PC-3 (cell line): ENCODE measurements at regions of chr20 and their contacts with region 1.

Region 1: DNA sequence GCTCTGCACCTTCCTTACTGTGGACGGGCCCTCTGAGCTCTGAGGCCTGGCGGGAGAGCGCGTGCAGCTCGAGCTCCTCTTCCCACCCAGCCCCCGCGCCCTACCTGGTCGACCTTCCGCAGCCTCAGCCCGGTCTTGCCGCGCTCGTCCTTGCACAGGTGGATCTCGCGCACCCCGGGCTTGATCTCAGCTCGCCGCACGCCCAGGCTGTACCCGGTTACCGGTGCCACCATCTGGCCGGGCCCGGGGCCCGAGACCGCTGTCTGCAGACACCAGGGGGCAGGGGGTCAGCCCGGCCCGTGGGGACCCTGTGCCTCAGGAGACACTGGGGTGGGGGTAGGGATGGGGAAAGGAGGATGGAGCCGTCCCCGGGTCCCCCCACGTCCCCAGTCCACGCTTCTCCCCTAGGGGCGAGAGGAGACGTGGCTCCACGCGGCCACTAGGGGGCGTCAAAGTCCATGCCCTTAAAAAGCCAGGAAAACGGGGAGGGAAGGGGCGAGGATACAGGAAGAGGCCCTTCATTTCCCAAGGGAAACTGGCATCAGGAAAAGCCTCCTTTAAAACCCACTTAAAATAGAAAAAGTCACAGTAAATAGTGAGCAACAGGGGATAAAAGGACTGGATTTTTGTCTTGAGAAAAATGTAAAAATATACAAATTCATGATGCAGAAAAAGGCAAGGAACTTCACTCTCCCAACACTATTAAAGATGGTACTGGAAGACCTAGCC is 15.5 kb downstream of the SDCBP2 start:
- DNase-seq: peak; percentile 83
- ATAC-seq: peak; percentile 86
- H3K4me3 ChIP-seq: no peak overlapping the region
- H3K27ac ChIP-seq: no peak overlapping the region
- H3K4me1 ChIP-seq: peaks cover 5% of the 10 kb centered on the region
- H3K27me3 ChIP-seq: no peaks in the 10 kb centered on the region
- CTCF ChIP-seq: peak; percentile 99

Region 2: GRCh38 chr20:891058-891705 is 422.2 kb before region 1 on chr20:
- CTCF ChIA-PET with region 1: no interaction called
- POLR2A ChIA-PET with region 1: no interaction called
- intact Hi-C with region 1: no loop called
- DNase-seq: no peak
- ATAC-seq: peak; percentile 30; the same call in 1 of the 2 replicates
- H3K4me3 ChIP-seq: no peak overlapping the region
- H3K27ac ChIP-seq: no peak overlapping the region
- H3K4me1 ChIP-seq: no peaks in the 10 kb centered on the region
- H3K27me3 ChIP-seq: peaks cover 21% of the 10 kb centered on the region
- CTCF ChIP-seq: no peak

Region 3: DNA sequence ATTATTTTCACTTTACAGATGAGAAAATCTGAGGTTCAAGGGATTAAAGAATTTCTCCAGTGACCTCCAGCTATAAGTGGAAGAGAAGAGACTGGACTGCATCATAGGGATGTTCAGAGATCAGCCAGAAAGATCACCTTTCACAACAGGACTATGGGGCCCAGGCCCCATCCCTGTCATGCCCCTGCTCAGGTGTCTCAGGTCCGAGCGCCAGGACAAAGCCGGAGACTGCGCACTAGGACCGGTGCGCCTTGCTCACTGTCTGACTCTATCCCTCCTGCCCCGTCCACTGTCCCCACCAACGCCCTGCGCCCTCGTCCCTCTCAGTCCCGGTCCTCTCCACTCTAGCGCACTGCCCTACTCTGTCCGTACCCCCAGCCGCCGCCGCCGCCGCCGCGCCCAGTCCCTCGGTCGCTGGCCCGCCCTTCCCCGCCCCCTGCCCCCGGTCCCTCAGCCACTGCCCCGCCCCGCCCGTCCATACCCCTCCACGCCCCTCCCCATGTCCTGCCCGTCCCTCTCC is 88.1 kb before region 1 on chr20:
- CTCF ChIA-PET with region 1: no interaction called
- POLR2A ChIA-PET with region 1: no interaction called
- intact Hi-C with region 1: no loop called
- DNase-seq: peak; percentile 41
- ATAC-seq: peak; percentile 84
- H3K4me3 ChIP-seq: peak overlapping the region; percentile 76
- H3K27ac ChIP-seq: no peak overlapping the region
- H3K4me1 ChIP-seq: no peaks in the 10 kb centered on the region
- H3K27me3 ChIP-seq: 0 out of 2 replicates have a peak, but pooled peaks cover 5% of the 10 kb centered on the region
- CTCF ChIP-seq: no peak

Region 4: DNA sequence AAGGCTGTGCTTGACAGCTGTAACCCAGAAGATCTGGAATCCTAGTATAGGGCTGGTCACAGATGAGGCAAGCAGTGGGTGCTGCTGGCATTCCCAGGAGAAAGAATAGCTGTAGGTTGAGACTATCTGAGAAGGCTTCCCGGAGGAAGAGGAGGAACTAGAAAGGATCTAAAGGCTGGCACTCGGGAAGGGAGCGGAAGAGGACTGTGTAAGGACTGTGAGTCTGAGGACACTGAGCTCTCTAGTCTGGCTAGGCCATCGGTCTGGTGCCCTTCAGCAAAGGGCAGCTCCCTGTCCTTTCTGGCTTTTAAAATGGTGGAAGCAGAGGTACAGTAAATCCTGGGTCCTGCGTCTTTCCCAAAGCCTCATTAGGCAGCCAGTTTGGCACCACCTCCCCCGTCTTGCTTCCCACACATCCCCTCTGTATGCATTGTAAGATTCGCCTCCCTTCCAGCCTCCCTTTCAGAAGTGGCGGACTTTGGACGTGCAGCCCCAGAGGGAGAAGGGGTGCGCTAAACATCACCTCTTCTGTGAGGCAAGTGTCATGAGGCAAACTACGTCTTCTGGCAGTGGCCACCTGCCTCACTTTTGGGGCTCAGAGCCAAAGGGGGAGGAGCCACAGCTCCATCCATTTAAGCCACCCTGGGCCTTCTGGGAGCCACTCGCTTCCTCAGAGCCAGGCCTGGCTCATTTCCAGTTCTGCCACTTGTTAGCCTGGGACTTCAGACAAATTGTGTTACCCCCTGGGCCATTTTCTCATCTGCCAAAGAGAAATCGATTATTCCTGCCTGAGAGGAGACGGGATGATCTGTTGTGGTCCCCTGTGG is 38.7 kb before region 1 on chr20:
- CTCF ChIA-PET with region 1: no interaction called
- POLR2A ChIA-PET with region 1: no interaction called
- intact Hi-C with region 1: no loop called
- DNase-seq: no peak
- ATAC-seq: no peak
- H3K4me3 ChIP-seq: no peak overlapping the region
- H3K27ac ChIP-seq: no peak overlapping the region
- H3K4me1 ChIP-seq: no peaks in the 10 kb centered on the region
- H3K27me3 ChIP-seq: no peaks in the 10 kb centered on the region
- CTCF ChIP-seq: no peak

Region 5: GRCh38 chr20:1291191-1291741 is 22.1 kb before region 1 on chr20:
- CTCF ChIA-PET with region 1: no interaction called
- POLR2A ChIA-PET with region 1: no interaction called
- intact Hi-C with region 1: no loop called
- DNase-seq: no peak
- ATAC-seq: no peak; the same call in 1 of the 2 replicates
- H3K4me3 ChIP-seq: no peak overlapping the region
- H3K27ac ChIP-seq: no peak overlapping the region
- H3K4me1 ChIP-seq: no peaks in the 10 kb centered on the region
- H3K27me3 ChIP-seq: no peaks in the 10 kb centered on the region
- CTCF ChIP-seq: no peak

Region 6: GRCh38 chr20:1370548-1371110 is 57.2 kb after region 1 on chr20:
- CTCF ChIA-PET with region 1: no interaction called
- POLR2A ChIA-PET with region 1: no interaction called
- intact Hi-C with region 1: loop called (anchors 2 kb)
- DNase-seq: peak; percentile 37
- ATAC-seq: peak; percentile 9; the same call in 1 of the 2 replicates
- H3K4me3 ChIP-seq: no peak overlapping the region
- H3K27ac ChIP-seq: 0 out of 2 replicates have a peak overlapping the region, but pooled peaks have one; percentile 16
- H3K4me1 ChIP-seq: peaks cover 54% of the 10 kb centered on the region
- H3K27me3 ChIP-seq: no peaks in the 10 kb centered on the region
- CTCF ChIP-seq: no peak

Region 7: GRCh38 chr20:1392823-1393506 is 79.6 kb after region 1 on chr20 and contains the start of gene FKBP1A:
- CTCF ChIA-PET with region 1: no interaction called
- POLR2A ChIA-PET with region 1: interaction called, 10 read pairs
- intact Hi-C with region 1: no loop called
- DNase-seq: peak; percentile 99
- ATAC-seq: peak; percentile 78
- H3K4me3 ChIP-seq: peak within 1 kb of the TSS; percentile 79
- H3K27ac ChIP-seq: peak within 1 kb of the TSS; percentile 43
- H3K4me1 ChIP-seq: peaks cover 66% of the 10 kb centered on the region
- H3K27me3 ChIP-seq: no peaks in the 10 kb centered on the region
- CTCF ChIP-seq: no peak
- total RNA-seq, gene FKBP1A: 178 and 198 TPM in 2 replicates